IMR-90 (cell line): ENCODE measurements at regions of chr2 and their contacts with region 1.

Region 1: DNA sequence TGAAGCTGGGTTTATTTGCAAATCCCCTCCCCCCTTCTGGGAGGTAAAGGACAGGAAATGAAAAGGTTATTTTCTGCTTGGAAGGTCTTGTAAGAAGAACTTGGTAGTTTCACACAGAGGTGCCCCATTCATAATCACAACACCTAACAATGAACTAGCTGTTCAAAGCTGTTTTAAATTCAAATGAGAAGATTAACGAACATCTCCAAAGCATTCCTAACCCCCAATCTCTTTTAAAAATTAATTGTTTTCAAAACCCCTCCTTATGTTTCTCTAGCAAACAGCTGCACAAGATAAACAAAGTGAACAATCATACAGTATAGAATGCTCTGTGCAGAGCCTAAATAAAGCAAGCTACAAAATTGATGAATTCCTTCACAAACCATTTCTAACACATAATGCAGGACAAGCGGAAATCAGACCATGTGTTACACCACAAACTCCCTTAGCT is 271.4 kb downstream of the SATB2 start:
- DNase-seq: no peak
- ATAC-seq: no peak
- H3K4me3 ChIP-seq: no peak overlapping the region
- H3K27ac ChIP-seq: no peak overlapping the region
- H3K4me1 ChIP-seq: no peaks in the 10 kb centered on the region
- H3K27me3 ChIP-seq: no peaks in the 10 kb centered on the region
- CTCF ChIP-seq: no peak
- POLR2A ChIP-seq: no peak
- RAD21 ChIP-seq: no peak

Region 2: DNA sequence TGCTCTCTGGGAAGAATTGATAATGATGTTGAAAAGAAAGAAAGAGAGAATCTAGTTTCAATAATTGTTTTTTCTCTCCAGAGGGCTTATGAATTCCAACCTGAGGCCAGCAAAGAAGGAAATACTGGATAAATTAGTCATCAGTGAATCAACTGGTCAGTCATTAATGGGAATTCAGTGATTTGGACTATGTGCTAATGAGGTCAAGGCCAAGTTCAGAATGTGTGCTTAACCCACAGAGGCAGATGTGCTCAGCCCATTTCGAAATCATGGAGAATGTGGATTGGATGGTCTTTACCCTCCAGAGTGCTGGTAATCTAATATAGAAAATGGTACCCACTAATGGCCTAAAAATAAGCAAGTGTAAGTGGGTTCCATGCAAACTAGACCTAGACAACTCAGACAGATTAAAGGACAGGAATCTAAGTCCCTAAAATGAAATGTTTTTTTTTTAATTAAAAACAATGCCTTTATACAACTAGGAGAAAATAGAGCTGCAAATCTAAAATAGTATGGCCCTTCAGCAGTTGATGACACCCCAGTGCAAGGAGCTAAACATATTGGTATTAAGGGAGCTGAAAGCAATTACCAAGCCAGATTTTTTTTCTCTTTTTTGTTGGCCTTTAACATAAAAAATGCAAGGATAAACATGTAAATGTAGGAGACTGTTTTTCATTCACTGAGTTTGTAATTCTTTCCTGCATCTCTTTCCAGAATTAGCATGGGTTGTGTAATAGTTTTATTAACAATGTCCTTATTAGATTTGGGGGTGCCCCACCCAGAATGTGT is 25.5 kb before region 1 on chr2:
- CTCF ChIA-PET with region 1: no interaction called
- POLR2A ChIA-PET with region 1: no interaction called
- dilution Hi-C with region 1: no loop called
- in situ Hi-C with region 1: no loop called
- intact Hi-C with region 1: loop called (anchors 1 kb)
- DNase-seq: peak; percentile 89
- ATAC-seq: peak; percentile 90
- H3K4me3 ChIP-seq: no peak overlapping the region
- H3K27ac ChIP-seq: peak overlapping the region; percentile 43; the same call in 1 of the 2 replicates
- H3K4me1 ChIP-seq: peaks cover 5% of the 10 kb centered on the region; the same call in 1 of the 2 replicates
- H3K27me3 ChIP-seq: no peaks in the 10 kb centered on the region
- CTCF ChIP-seq: no peak
- POLR2A ChIP-seq: no peak
- RAD21 ChIP-seq: no peak